Prostate gland (tissue), 2 donors: ENCODE measurements at regions of chr12 and their contacts with region 1.

Region 1: DNA sequence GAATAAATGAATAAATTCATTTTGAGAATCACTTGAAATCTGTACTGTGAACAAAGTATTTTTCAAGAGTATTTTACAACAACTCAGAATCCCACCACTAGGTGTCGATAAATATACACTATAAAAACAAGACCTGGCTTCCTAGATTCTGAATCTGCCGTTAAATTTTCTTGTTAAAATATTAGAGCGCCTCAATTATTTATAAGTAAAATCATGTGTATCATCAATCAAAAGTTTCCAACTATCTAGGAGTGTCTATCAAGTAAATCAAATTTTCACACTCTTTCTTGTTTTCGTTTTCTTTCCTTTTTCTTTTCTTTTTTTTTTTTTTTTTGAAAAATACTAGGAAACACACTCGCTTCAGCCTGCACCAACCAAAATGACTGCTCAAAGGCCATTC is 179.2 kb upstream of the DCN start:
- DNase-seq: no peak
- H3K4me3 ChIP-seq: no peak overlapping the region
- H3K27ac ChIP-seq: no peak overlapping the region
- H3K4me1 ChIP-seq: no peaks in the 10 kb centered on the region
- H3K27me3 ChIP-seq: no peaks in the 10 kb centered on the region
- CTCF ChIP-seq: peak; percentile 68 to 84 (median 78)
- POLR2A ChIP-seq: no peak

Region 2: GRCh38 chr12:91307957-91308670 is 53.8 kb before region 1 on chr12:
- intact Hi-C with region 1: no loop called
- DNase-seq: no peak
- H3K4me3 ChIP-seq: no peak overlapping the region
- H3K27ac ChIP-seq: no peak overlapping the region
- H3K4me1 ChIP-seq: no peaks in the 10 kb centered on the region
- H3K27me3 ChIP-seq: no peaks in the 10 kb centered on the region
- CTCF ChIP-seq: no peak
- POLR2A ChIP-seq: no peak

Region 3: DNA sequence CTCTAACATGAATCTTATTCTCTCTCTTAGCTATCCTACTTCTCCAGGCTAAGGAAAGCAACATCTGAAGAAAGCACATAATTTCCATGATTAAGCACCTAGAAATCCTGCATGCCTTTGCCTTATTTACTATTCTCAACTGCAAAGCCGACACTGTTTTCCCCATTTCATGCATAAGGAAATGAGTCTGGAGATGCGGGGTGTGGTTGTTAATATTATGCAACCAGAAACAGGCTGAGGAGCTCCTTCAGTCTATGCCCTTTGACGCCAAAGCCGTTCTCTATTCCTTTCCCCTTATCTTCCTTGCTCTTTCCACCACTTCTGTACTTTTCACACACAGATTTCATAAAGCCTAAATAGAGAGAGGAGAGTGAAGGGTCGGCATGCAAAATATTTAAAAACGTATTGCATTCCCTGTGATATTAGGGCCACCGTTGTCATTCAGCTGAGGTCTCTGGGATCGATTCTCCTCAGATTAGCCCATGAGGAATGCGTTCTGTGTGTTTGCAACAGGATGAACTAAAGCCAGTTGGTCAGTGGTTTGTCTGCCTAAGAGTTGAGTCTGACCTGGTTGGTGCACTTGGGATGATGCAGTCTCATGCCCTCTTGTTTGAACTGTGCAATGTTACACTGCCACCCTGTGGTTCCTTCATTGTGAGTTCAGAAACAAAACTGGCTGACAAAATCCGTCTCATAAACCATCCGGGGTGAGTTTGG is 1287.8 kb after region 1 on chr12:
- intact Hi-C with region 1: loop called (anchors 5 kb)
- DNase-seq: peak; percentile 50
- H3K4me3 ChIP-seq: no peak overlapping the region
- H3K27ac ChIP-seq: no peak overlapping the region
- H3K4me1 ChIP-seq: no peaks in the 10 kb centered on the region
- H3K27me3 ChIP-seq: no peaks in the 10 kb centered on the region
- CTCF ChIP-seq: peak; percentile 41 to 76 (median 56)
- POLR2A ChIP-seq: no peak